BJ (cell line): ENCODE measurements at regions of chr2 and their contacts with region 1.

Region 1: DNA sequence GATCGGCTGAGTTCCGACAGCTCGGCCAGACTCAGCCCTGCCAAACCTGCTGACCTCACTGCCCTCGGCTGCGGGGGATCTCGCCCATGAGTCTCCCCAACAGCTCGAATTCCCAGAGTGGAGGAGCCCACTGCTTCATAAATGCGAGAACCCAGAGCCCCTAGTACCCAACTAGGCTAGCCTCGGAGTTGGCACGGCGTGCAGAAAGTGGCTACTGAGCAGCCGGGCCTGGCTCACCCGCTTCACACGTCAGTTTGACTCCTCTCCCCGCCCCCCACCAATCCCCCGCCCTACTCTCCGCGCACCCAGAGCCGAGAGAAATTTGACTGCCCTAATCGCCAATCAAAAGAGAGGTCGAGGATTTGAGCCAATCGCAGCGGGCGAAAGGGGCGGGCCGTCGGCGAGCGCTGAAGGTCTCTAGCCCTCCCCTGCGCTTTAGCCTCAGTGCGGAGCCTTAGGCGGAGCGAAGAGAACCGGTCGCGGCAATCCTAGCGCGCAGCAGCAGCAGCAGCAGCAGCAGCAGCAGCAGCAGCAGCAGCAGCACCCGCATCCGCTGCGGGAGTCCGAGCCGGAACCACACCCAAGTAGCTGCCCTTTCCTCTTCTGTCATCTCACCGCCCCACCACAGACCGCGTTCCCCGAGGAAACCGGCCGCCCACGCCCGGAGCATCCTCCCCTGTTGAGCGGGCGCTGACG is at the start of gene GLS:
- DNase-seq: peak; percentile 85
- H3K4me3 ChIP-seq: peak within 1 kb of the TSS; percentile 99
- H3K27me3 ChIP-seq: no peaks in the 10 kb centered on the region
- CTCF ChIP-seq: no peak
- polyA plus RNA-seq, gene GLS: 132 and 372 TPM in 2 replicates

Region 2: GRCh38 chr2:190858817-190859216 is 21.7 kb before region 1 on chr2:
- CTCF ChIA-PET with region 1: interaction called, 4 read pairs
- POLR2A ChIA-PET with region 1: interaction called, 17 read pairs
- DNase-seq: no peak
- H3K4me3 ChIP-seq: no peak overlapping the region
- H3K27me3 ChIP-seq: no peaks in the 10 kb centered on the region
- CTCF ChIP-seq: no peak

Region 3: DNA sequence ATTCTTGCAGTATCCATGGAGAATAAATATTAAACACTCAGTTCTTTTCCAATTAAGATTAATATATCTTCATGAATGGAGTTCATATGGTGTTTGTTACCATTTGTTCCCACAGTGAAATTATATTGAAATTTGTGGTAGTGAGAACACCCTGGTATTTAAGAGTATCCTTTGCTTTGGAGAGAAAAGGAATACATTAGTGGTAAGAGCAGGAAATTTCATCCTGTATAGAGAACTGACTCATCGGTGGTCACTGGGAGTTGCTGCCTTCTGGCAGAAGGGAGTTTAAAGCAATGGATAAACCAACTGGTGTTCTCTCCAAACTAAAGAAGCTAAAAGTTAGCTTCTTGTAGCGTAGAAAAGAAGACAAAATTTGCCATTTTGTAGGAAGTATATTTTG is 472.0 kb after region 1 on chr2:
- CTCF ChIA-PET with region 1: no interaction called
- POLR2A ChIA-PET with region 1: no interaction called
- DNase-seq: peak; percentile 85
- H3K4me3 ChIP-seq: no peak overlapping the region
- H3K27me3 ChIP-seq: no peaks in the 10 kb centered on the region
- CTCF ChIP-seq: no peak